G401 (cell line): ENCODE measurements at regions of chr11 and their contacts with region 1.

Region 1: GRCh38 chr11:47946682-47947575 is 33.4 kb upstream of the PTPRJ start:
- DNase-seq: no peak

Region 2: DNA sequence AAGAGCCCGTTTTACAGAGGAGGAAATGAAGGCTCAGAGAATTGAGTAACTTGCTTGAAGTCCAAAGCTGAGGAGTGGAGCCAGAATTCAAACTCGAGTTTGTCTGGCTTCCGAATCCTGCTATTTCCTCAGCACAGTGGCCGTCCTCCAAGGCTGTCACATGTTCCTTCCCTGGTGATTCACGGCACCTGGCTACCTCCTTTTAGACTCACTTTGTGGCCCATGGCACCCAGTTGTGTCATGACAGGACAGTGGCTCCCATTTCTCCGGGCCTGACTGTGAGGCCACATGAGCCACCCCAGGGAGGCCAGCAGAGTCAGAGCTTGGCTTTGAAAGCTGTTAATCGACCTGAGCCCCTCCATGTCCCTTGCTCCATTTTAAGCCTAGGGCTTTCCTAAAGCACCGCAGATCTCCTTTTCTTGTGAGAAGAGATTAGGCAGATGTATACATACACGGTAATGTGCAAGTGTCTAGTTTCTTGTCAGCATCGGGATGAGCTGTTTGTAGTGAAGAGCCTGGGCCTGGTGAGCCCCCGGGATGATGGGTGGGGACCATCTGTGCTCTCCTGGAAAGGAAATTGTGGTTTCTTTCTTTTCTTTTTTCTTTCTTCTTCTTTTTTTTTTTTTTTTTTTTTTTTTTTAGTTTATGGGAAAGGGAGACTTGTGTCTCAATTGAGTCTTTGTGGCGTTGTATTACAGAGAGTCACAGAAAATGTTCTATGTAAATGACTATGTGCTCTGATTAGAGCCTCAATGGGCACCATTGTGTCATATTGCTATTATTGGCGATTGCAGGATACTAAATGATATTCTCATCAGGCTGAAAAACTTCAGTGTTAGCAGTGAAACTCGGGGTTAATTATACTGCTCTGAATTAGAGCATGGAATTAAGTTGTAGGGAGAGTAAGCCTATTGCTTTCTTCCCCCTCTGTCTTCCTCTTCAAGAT is 88.3 kb after region 1 on chr11:
- in situ Hi-C with region 1: no loop called
- DNase-seq: peak; percentile 44

Region 3: GRCh38 chr11:48109046-48109666 is 162.2 kb after region 1 on chr11:
- in situ Hi-C with region 1: loop called (anchors 25 kb)
- DNase-seq: peak; percentile 74